Breast epithelium (tissue), 4 donors: ENCODE measurements at regions of chr12 and their contacts with region 1.

Region 1: DNA sequence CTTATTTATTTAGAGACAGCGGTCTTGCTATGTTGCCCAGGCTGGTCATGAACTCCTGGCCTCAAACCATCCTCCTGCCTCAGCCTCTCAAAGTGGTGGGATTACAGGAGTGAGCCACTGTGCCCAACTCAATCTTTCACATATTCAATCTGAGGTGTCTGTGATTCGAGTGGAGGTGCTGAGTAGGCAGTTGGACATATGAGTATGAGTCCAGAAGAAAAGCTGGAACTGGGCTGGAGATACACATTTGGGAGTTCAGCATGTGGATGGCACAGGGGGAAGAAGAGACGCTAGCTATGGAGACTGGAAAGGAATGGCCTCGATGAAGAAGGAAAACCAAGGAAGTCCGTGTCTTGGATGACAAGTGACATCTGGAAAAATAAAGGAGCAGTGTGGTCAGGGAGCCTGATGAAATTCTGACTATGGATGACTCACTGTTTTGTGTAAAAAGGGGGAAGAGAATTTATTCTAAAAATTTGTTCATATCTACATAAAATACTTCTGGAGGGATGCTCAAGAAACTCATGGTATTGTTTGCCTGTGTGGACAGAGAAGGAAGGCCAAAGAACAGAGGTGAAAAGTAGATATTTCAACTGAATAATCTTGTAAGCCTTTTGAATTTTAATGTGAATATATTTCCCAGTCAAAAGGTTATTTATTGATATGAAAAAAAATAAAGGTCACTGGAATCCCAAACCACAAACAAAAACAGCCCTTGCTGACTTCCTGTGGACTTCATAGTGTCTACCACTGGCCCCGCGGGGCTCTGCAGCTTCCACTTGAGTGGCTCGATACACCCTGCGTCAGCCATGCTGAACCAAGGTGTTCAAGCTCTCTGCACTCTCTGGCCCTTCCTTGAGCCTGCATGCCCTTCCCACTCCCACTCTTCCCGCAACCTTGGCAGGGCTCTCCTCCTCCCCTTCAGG is 8.9 kb upstream of the LTA4H start:
- DNase-seq: no peak
- H3K4me3 ChIP-seq: no peak overlapping the region
- H3K27ac ChIP-seq: no peak overlapping the region
- H3K4me1 ChIP-seq: peaks cover 0 to 6% of the 10 kb centered on the region in 2 donors
- H3K27me3 ChIP-seq: no peaks in the 10 kb centered on the region
- CTCF ChIP-seq: no peak
- POLR2A ChIP-seq: no peak

Region 2: GRCh38 chr12:95130096-95130495 is 914.2 kb before region 1 on chr12:
- intact Hi-C with region 1: loop called (anchors 5 kb)
- DNase-seq: no peak
- H3K4me3 ChIP-seq: no peak overlapping the region
- H3K27ac ChIP-seq: no peak overlapping the region
- H3K4me1 ChIP-seq: no peaks in the 10 kb centered on the region
- H3K27me3 ChIP-seq: no peaks in the 10 kb centered on the region
- CTCF ChIP-seq: no peak
- POLR2A ChIP-seq: no peak

Region 3: GRCh38 chr12:96177013-96177412 is 132.7 kb after region 1 on chr12:
- intact Hi-C with region 1: no loop called
- DNase-seq: no peak
- H3K4me3 ChIP-seq: no peak overlapping the region
- H3K27ac ChIP-seq: no peak overlapping the region
- H3K4me1 ChIP-seq: no peaks in the 10 kb centered on the region
- H3K27me3 ChIP-seq: no peaks in the 10 kb centered on the region
- CTCF ChIP-seq: no peak
- POLR2A ChIP-seq: no peak